Mammary epithelial cell (primary cell): ENCODE measurements at regions of chr14 and their contacts with region 1.

Region 1: DNA sequence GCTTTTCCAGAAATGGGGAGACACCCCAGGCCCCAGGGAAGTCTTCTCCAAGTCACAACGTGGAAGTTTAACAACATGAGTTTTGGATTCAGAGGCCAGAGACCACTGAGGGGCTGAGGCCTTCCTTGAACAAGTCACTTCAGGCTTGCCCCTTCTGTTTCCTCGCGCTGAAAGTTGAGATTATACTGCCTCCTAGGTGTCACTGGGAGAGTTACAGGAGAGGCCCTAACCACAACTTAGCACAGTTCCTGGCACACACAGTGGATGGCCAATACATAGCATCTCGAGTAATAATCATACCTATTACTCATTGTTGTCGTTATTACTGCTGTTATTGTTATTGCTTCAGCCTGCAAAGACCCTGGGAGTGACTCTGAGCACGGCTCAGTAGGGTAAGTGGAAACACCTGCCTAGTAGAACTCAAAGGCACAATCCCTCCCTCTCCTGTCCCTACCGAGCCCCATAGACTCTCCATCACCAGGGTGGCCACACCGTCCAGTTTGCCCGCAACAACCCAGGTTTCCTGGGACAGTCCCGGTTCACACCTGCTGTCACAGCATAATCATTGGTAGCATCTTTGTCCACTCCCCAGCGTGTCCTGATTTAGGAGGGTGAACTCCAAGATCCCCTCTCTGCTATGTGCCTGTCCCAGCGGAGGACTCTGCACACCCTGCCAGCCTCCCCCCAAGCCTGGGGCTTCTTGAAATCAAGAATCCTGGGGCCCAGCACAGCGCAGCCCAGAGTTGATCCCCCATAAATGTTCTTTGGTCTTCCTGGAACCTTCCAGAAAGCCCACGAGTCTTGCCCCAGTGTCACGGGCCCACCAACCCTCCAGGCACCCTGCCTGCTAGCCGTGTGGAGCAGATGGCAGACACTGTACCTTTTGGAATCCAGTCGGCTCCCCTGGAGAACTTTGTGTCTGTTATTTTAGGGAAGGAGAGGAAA is 85.0 kb downstream of the SYNE3 start:
- DNase-seq: no peak
- H3K4me3 ChIP-seq: no peak overlapping the region
- H3K27ac ChIP-seq: no peak overlapping the region
- H3K4me1 ChIP-seq: no peaks in the 10 kb centered on the region
- H3K27me3 ChIP-seq: no peaks in the 10 kb centered on the region
- CTCF ChIP-seq: peak; percentile 61

Region 2: GRCh38 chr14:94173885-94174603 is 1257.4 kb before region 1 on chr14 and contains the start of gene PPP4R4:
- CTCF ChIA-PET with region 1: no interaction called
- dilution Hi-C with region 1: no loop called
- in situ Hi-C with region 1: no loop called
- intact Hi-C with region 1: no loop called
- DNase-seq: peak; percentile 71
- H3K4me3 ChIP-seq: peak within 1 kb of the TSS; percentile 68 to 87 (median 70)
- H3K27ac ChIP-seq: peak within 1 kb of the TSS; percentile 45
- H3K4me1 ChIP-seq: peaks cover 45% of the 10 kb centered on the region
- H3K27me3 ChIP-seq: no peaks in the 10 kb centered on the region
- CTCF ChIP-seq: no peak
- total RNA-seq, gene PPP4R4: 6.3 to 19.3 TPM

Region 3: GRCh38 chr14:95098984-95099599 is 332.4 kb before region 1 on chr14:
- CTCF ChIA-PET with region 1: no interaction called
- dilution Hi-C with region 1: no loop called
- in situ Hi-C with region 1: no loop called
- intact Hi-C with region 1: loop called (anchors 1 kb)
- DNase-seq: peak; percentile 49
- H3K4me3 ChIP-seq: no peak overlapping the region
- H3K27ac ChIP-seq: no peak overlapping the region
- H3K4me1 ChIP-seq: no peaks in the 10 kb centered on the region
- H3K27me3 ChIP-seq: no peaks in the 10 kb centered on the region
- CTCF ChIP-seq: peak; percentile 70 to 89

Region 4: GRCh38 chr14:95174184-95174792 is 257.2 kb before region 1 on chr14:
- CTCF ChIA-PET with region 1: no interaction called
- dilution Hi-C with region 1: no loop called
- in situ Hi-C with region 1: no loop called
- intact Hi-C with region 1: loop called (anchors 1 kb)
- DNase-seq: no peak
- H3K4me3 ChIP-seq: no peak overlapping the region
- H3K27ac ChIP-seq: no peak overlapping the region
- H3K4me1 ChIP-seq: no peaks in the 10 kb centered on the region
- H3K27me3 ChIP-seq: no peaks in the 10 kb centered on the region
- CTCF ChIP-seq: peak; percentile 19 to 39

Region 5: DNA sequence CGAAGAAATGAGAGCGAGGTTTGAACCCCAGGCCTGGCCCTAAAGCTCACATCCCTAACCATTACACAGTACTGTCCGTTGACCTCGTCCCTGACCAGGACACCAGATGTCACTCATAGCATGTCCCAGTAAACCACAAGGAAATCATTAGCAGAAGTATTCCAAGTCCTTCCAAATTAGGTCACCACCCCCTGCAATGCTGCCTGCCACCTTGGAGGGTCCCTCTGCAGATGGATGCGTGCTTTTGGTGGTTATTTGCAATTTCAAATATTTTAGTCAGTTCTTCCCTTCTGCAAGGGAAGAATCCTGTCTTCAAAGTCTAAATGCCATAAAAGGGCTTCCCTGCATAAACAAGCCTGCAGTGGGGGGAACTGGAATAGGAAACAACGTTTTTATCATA is 183.0 kb before region 1 on chr14:
- CTCF ChIA-PET with region 1: no interaction called
- dilution Hi-C with region 1: no loop called
- in situ Hi-C with region 1: no loop called
- intact Hi-C with region 1: loop called (anchors 5 kb)
- DNase-seq: no peak
- H3K4me3 ChIP-seq: no peak overlapping the region
- H3K27ac ChIP-seq: no peak overlapping the region
- H3K4me1 ChIP-seq: peaks cover 20% of the 10 kb centered on the region
- H3K27me3 ChIP-seq: no peaks in the 10 kb centered on the region
- CTCF ChIP-seq: no peak

Region 6: DNA sequence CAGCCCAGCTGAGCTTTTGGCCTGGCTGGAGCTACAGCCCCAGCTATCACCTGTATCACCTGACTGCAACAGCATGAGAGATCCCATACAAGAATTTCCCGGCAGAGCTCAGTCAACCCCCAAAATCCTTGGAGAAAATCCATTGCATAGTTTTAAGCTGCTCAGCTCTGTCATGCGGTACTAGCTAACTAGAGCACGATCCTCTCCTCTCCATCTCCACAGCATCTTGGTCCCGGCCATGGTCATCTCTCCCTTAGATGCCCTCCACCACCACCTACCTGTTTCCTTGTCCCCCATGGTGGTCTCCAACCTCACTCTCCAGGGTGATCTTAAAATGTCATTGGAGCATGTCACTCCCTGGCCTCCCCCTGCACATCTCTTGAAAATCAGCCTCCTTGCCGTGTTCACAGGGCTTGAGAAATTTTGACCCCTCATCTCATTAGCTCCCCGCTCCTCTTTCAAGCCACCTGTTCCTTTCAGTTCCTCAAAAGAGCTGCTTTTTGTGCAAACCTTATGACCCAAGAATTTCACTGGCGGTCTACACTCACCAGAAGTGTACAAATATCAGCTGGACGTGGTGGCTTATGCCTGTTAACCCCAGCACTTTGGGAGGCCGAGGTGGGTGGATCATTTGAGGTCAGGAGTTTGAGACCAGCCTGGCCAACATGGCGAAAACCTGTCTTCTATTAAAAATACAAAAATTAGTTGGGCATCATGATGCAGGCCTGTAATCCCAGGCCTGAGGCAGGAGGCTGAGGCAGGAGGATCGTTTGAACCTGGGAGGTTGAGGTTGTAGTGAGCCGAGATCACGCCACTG is 103.7 kb before region 1 on chr14:
- CTCF ChIA-PET with region 1: no interaction called
- dilution Hi-C with region 1: no loop called
- in situ Hi-C with region 1: no loop called
- intact Hi-C with region 1: no loop called
- DNase-seq: no peak
- H3K4me3 ChIP-seq: no peak overlapping the region
- H3K27ac ChIP-seq: no peak overlapping the region
- H3K4me1 ChIP-seq: peaks cover 37% of the 10 kb centered on the region
- H3K27me3 ChIP-seq: no peaks in the 10 kb centered on the region
- CTCF ChIP-seq: no peak